CD4-positive, alpha-beta memory T cell (primary cell): ENCODE measurements at regions of chr15 and their contacts with region 1.

Region 1: GRCh38 chr15:90286678-90287077 is 21.2 kb downstream of the NGRN start:
- DNase-seq: peak; percentile 44 to 60 (median 52)
- H3K4me3 ChIP-seq: no peak overlapping the region
- H3K4me3 Mint-ChIP-seq: no peak overlapping the region
- H3K27ac ChIP-seq: no peak overlapping the region
- H3K27ac Mint-ChIP-seq: no peak overlapping the region
- H3K4me1 ChIP-seq: no peaks in the 10 kb centered on the region
- H3K4me1 Mint-ChIP-seq: peaks cover 0 to 2% (median under 1%) of the 10 kb centered on the region in 4 donors
- H3K27me3 ChIP-seq: no peaks in the 10 kb centered on the region
- H3K27me3 Mint-ChIP-seq: no peaks in the 10 kb centered on the region

Region 2: GRCh38 chr15:90143166-90143655 is 143.5 kb before region 1 on chr15:
- CTCF ChIA-PET with region 1: interaction called, 5 read pairs
- POLR2A ChIA-PET with region 1: no interaction called
- intact Hi-C with region 1: loop called (anchors 1 kb)
- DNase-seq: peak; percentile 50 to 62 (median 56)
- H3K4me3 ChIP-seq: no peak overlapping the region
- H3K4me3 Mint-ChIP-seq: peak overlapping the region in 5 of 8 donors; percentile 35 to 69 (median 60)
- H3K27ac ChIP-seq: no peak overlapping the region
- H3K27ac Mint-ChIP-seq: peak overlapping the region in 6 of 7 donors; percentile 62 to 92 (median 81)
- H3K4me1 ChIP-seq: peaks cover 18% of the 10 kb centered on the region
- H3K4me1 Mint-ChIP-seq: peaks cover 11 to 40% (median 21%) of the 10 kb centered on the region in 4 donors
- H3K27me3 ChIP-seq: no peaks in the 10 kb centered on the region
- H3K27me3 Mint-ChIP-seq: no peaks in the 10 kb centered on the region

Region 3: DNA sequence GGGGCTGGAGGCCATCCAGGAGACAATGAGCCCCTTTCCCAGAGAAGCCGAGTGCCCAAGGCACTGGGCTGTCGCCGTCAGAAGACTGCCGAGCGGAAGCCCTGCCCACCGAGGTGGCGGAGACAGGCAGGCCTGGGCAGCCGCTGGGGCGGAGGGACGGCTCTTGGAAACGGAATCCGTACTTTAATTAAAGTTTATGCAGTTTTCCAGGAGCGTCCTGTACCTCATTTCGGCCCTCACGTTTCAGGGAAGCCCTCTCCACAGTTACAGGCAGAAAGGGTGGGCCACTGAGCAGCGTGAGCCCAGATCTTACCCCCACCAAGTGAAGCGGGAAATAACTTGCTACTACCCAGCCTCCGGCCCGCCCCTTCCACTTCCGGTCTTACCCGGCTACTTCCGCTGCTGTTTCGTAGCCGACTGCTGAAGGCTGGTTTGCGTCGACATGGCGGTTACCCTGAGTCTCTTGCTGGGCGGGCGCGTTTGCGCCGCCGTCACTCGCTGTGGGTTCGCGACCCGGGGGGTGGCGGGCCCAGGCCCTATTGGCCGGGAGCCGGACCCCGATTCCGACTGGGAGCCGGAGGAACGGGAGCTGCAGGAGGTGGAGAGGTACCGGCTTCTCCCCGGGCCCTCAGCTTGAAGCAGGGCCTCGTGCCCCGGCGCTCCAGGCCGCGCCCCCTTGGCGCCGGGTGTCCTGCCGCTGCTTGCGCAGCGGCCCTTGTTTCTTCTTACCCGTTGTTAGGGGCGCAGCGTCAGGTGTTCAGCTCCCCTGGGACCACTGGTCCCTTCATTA is 21.2 kb before region 1 on chr15 and contains the start of gene NGRN:
- CTCF ChIA-PET with region 1: interaction called, 4 read pairs
- POLR2A ChIA-PET with region 1: no interaction called
- intact Hi-C with region 1: loop called (anchors 1 kb)
- DNase-seq: peak; percentile 92 to 95 (median 94)
- H3K4me3 ChIP-seq: peak within 1 kb of the TSS; percentile 66 to 97
- H3K4me3 Mint-ChIP-seq: peak within 1 kb of the TSS; percentile 93 to 99 (median 98)
- H3K27ac ChIP-seq: peak within 1 kb of the TSS; percentile 95
- H3K27ac Mint-ChIP-seq: peak within 1 kb of the TSS; percentile 98 to 100 (median 99)
- H3K4me1 ChIP-seq: peaks cover 44% of the 10 kb centered on the region
- H3K4me1 Mint-ChIP-seq: peaks cover 26 to 62% (median 42%) of the 10 kb centered on the region in 4 donors
- H3K27me3 ChIP-seq: no peaks in the 10 kb centered on the region
- H3K27me3 Mint-ChIP-seq: no peaks in the 10 kb centered on the region
- total RNA-seq, gene NGRN: 53.7 to 59.2 TPM

Region 4: DNA sequence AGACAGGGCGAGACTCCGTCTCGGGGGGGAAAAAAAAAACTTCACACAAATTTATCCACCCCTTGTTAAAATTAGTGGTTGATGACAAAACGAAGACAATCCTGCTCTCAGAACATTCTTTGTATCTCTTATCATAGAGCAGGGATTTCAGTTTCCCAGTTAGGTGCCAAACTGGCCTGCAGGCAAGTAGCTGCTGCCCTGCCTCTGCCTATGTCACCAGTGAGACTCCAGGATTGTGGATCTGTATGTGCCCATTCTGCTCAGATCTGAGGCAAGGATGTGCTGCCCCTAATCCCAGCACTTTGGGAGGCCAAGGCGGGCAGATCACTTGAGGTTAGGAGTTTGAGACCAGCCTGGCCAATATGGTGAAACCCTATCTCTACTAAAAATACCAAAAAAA is 155.7 kb after region 1 on chr15:
- CTCF ChIA-PET with region 1: no interaction called
- POLR2A ChIA-PET with region 1: no interaction called
- intact Hi-C with region 1: no loop called
- DNase-seq: no peak
- H3K4me3 ChIP-seq: no peak overlapping the region
- H3K4me3 Mint-ChIP-seq: no peak overlapping the region
- H3K27ac ChIP-seq: no peak overlapping the region
- H3K27ac Mint-ChIP-seq: no peak overlapping the region
- H3K4me1 ChIP-seq: no peaks in the 10 kb centered on the region
- H3K4me1 Mint-ChIP-seq: peaks cover 5 to 15% (median 13%) of the 10 kb centered on the region in 4 donors
- H3K27me3 ChIP-seq: no peaks in the 10 kb centered on the region
- H3K27me3 Mint-ChIP-seq: no peaks in the 10 kb centered on the region